ENCODE measurements at regions of chr3 and their contacts with region 1.

Region 1: DNA sequence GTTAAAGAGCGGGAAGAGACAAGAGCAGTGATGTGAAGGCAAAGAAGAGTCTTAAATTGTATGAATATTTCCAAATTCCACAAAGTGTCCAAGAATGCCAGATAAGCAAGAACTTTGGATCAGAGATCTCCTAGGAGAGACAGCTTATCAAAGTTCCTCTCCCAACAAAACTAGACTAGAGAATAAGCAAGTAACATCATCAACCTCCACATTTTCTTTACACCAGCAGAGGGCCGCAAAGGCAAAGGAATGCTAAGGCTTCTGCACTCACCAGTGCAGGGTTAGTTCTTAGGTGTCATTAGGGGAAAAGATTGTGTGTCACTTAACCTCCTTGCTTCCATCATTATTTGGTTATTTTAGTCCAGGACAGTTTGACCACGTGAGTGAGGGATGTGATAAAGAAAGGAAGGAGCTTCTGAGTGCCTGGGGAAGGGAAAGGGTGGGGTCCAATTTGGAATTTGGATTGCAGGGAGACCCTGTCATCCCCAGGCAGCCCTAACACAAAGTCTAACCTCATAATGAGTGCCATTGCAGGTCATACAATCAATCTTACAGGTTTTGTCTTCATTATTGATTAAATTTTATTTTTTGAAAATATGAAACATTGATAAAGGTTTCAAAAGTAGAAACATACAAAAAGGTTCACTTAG is 7.5 kb upstream of the CMTM6 start:
- DNase-seq: peak; percentile 91
- H3K4me3 Mint-ChIP-seq: no peak overlapping the region
- H3K27ac Mint-ChIP-seq: no peak overlapping the region
- H3K4me1 Mint-ChIP-seq: peaks cover 2% of the 10 kb centered on the region
- H3K27me3 Mint-ChIP-seq: peaks cover 2% of the 10 kb centered on the region

Region 2: DNA sequence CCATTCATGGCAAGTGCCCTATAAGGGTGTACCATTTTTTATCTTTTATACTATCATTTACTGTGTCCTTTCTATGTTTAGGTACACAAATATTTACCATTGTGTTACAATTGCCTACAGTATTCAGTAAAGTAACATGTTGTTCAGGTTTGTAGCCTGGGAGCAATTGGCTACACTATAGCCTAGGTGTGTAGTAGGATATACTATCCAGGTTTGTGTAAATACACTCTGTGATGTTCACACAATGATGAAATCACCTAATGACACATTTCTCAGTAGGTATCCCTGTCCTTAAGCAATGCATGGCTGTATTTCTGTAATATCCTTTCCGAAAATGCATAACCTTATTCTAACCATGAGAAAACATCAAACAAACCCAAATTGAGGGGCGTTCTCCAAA is 156.9 kb after region 1 on chr3:
- intact Hi-C with region 1: loop called (anchors 1 kb)
- DNase-seq: no peak
- H3K4me3 Mint-ChIP-seq: no peak overlapping the region
- H3K27ac Mint-ChIP-seq: no peak overlapping the region
- H3K4me1 Mint-ChIP-seq: no peaks in the 10 kb centered on the region
- H3K27me3 Mint-ChIP-seq: peaks cover 14% of the 10 kb centered on the region

Region 3: DNA sequence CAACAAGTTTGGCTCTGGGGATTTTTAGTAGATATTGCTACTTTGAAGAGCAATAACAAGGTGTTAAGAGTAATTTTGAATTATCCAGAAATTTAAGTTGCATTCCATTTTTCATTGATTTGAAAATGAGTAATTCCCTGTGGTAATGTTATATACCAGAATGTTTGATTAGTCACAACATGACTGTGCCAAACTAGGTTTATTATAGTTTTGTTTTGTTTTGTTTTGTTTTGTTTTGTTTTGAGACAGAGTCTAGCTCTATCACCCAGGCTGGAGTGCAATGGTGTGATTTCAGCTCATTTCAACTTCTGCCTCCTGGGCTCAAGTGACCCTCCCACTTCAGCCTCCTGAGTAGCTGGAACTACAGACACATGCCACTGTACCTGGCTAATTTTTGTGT is 215.5 kb after region 1 on chr3:
- intact Hi-C with region 1: no loop called
- DNase-seq: peak; percentile 33
- H3K4me3 Mint-ChIP-seq: no peak overlapping the region
- H3K27ac Mint-ChIP-seq: no peak overlapping the region
- H3K4me1 Mint-ChIP-seq: peaks cover 4% of the 10 kb centered on the region
- H3K27me3 Mint-ChIP-seq: no peaks in the 10 kb centered on the region

Region 4: GRCh38 chr3:32781210-32781968 is 271.2 kb after region 1 on chr3:
- intact Hi-C with region 1: loop called (anchors 5 kb)
- DNase-seq: peak; percentile 91
- H3K4me3 Mint-ChIP-seq: peak overlapping the region; percentile 94
- H3K27ac Mint-ChIP-seq: peak overlapping the region; percentile 67
- H3K4me1 Mint-ChIP-seq: peaks cover 4% of the 10 kb centered on the region
- H3K27me3 Mint-ChIP-seq: peaks cover 11% of the 10 kb centered on the region

Region 5: GRCh38 chr3:32934150-32934742 is 424.0 kb after region 1 on chr3:
- intact Hi-C with region 1: loop called (anchors 1 kb)
- DNase-seq: peak; percentile 71
- H3K4me3 Mint-ChIP-seq: no peak overlapping the region
- H3K27ac Mint-ChIP-seq: no peak overlapping the region
- H3K4me1 Mint-ChIP-seq: no peaks in the 10 kb centered on the region
- H3K27me3 Mint-ChIP-seq: peaks cover 11% of the 10 kb centered on the region

Measured in activated CD4-positive, alpha-beta T cell treated with anti-CD3 and anti-CD28 coated beads, Interleukin-2, amount 10 ng/mL, durations not matched to agents 24 days and 14 days (primary cell).